KBM-7 (cell line): ENCODE measurements at regions of chr1 and their contacts with region 1.

Region 1: DNA sequence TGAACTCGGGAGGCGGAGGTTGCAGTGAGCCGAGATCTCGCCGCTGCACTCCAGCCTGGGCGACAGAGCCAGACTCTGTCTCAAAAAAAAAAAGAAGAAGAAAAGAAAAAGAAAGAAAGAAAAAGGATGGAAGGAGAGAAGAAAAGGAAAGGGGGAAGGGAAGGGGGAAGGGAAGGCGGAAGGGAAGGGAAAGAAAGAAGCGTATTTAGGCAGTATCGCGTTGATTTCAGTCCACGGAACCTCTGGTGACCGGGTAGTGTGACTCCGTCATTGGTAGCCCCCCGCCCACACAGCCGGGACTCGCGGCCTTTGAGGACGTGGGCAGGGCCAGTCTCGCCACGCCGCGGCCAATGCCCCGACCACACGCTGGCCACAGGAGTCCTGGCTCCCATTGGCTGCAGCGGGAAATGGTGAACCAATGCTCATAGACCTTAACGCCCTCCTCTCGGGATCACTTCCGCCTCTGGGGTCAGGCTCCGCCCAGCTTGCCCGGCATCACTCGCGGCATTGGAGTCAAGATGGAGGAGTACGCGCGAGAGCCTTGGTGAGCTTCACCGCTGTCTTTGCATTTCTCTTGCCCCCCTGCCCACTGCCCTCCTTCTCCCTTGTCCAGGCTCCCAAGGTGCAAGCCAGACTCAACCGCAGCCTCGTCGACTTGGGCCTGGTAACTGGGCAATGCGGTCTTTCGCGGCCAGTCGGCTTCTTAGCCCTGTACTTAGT is at the start of gene TIMM17A:
- DNase-seq: peak; percentile 96

Region 2: DNA sequence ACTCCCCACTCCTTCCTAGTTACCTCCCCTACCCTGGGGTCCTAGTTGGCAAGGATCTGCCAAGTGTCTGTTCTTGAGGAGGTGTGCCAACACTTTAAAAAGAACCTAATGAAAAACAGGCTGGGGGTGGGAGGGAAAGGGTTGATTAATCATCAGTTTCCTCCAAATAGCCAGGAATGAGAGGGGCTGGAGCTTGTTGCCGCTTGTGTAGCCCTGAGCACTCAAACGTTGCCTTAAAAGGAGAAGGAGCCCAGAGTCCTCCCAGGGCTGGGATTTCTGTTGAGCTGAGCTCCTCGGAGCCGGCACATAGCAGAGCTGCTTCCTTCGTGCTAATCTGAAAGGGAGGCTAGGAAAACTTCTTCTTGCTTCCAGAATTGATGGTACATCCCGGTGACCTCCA is 50.6 kb before region 1 on chr1:
- in situ Hi-C with region 1: loop called (anchors 10 kb)
- DNase-seq: no peak

Region 3: GRCh38 chr1:202105539-202106276 is 150.5 kb after region 1 on chr1:
- in situ Hi-C with region 1: no loop called
- DNase-seq: no peak